ENCODE measurements at regions of chr1 and their contacts with region 1.

Region 1: DNA sequence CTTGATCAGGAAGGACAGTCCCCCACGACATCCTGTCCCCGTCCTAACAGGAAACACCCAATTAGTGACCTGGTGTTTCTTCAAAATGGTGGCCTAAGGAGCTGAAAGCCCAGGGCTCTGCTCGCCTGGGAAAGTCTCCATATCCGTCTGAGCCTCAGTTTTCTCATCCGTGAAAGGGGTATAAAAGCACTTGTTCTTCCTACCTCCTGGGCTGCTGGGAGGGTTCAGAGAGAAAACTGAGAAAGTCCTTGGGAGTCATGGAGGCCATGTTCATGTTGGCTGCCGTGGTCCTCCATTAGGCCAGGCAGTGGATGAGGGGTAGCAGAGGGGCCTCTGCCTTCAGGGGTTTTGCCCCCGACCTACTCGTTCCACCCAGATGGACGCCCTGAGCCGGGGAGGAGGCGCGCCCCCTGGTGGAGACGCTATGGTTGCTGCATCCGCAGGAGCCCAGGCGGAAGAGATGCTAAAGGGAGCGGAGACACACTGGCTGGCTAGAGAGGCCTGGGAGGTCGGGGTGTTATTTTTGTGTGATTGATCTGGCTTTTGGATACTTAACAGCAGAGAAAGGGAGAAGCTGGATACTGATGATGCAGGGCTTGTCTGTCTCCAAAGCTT is 113.5 kb downstream of the PRDM2 start:
- DNase-seq: peak in 1 of 2 donors; percentile 49
- ATAC-seq: peak in 3 of 8 donors; percentile 41 to 52 (median 44)
- H3K4me3 ChIP-seq: no peak overlapping the region
- H3K27ac ChIP-seq: no peak overlapping the region
- H3K4me1 ChIP-seq: peaks cover 0 to 7% (median 3%) of the 10 kb centered on the region in 9 donors
- H3K27me3 ChIP-seq: no peaks in the 10 kb centered on the region
- CTCF ChIP-seq: peak; percentile 21 to 76 (median 50)

Region 2: GRCh38 chr1:13667691-13668090 is 145.8 kb before region 1 on chr1:
- intact Hi-C with region 1: loop called in 5 of 10 experiments (anchors 2 to 10 kb)
- DNase-seq: no peak
- ATAC-seq: no peak
- H3K4me3 ChIP-seq: no peak overlapping the region
- H3K27ac ChIP-seq: no peak overlapping the region
- H3K4me1 ChIP-seq: peaks cover 0 to 13% (median 0%) of the 10 kb centered on the region in 9 donors
- H3K27me3 ChIP-seq: peaks cover 0 to 9% (median 0%) of the 10 kb centered on the region in 7 donors
- CTCF ChIP-seq: no peak

Region 3: GRCh38 chr1:13976485-13976884 is 163.0 kb after region 1 on chr1:
- intact Hi-C with region 1: no loop called
- DNase-seq: no peak
- ATAC-seq: no peak
- H3K4me3 ChIP-seq: no peak overlapping the region
- H3K27ac ChIP-seq: no peak overlapping the region
- H3K4me1 ChIP-seq: no peaks in the 10 kb centered on the region
- H3K27me3 ChIP-seq: peaks cover 0 to 5% (median 0%) of the 10 kb centered on the region in 7 donors
- CTCF ChIP-seq: no peak

Region 4: DNA sequence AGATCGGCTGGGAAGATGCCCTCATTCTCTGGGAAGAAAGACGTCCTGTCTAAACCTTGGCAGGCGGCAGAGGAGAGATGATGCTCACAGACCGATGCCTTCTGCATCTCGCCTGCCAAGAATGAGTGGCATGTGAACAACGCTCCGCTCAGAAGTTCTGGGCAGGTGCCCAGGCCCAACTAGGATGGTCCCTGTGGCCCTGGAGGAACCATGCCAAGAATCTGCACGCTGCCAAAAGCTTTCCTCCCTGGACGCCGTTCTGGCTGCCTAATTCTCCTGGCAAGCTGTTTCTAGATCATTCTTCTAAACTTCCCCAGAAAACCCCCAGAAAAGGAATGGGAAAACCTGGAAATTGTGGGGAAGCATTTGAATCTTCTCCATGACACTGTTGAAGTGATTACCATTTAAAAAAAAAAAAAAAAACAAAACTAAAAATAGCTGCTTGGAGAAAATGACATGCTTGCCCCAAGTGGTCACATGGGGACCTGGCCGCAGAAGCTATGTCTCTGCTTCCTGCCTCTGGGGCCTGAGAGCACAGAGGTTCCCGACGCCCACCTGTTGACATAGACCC is 327.4 kb after region 1 on chr1:
- intact Hi-C with region 1: no loop called
- DNase-seq: peak; percentile 67 to 75
- ATAC-seq: peak; percentile 69 to 92 (median 84)
- H3K4me3 ChIP-seq: no peak overlapping the region
- H3K27ac ChIP-seq: peak overlapping the region in 5 of 10 donors; percentile 4 to 64 (median 49)
- H3K4me1 ChIP-seq: peaks cover 0 to 18% (median 7%) of the 10 kb centered on the region in 9 donors
- H3K27me3 ChIP-seq: no peaks in the 10 kb centered on the region
- CTCF ChIP-seq: no peak

Measured in heart right ventricle (tissue), 16 donors.